ENCODE measurements at regions of chr9 and their contacts with region 1.

Region 1: DNA sequence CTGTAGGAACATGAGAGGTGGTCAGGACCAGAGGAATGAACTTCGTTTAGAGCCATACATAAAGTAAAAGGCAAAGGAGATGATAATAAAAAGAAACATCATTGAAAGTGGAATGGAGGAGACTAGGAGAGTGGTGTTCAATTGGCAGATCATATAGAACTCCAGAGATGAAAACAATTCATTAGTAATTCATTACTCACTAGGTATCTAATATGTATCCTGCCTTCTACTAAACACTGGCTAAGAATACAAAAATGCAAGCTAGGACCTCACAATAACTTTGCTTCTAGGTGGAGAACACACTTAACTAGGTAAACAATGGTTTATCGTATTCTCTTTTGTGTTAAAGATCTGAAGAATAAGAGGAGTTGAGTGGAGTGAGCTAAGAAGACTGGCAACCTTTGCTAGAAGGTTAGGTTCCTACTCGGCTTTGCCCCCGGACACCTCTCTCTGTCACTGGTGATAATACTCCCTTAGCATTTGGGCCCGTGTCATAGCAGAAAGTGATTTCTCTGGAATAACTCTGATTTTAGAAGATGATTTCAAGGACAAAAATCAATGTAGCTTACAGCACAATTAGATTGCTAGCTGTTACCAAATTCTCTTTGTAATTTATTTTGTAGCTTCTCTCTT is 88.6 kb upstream of the IFNE start:
- DNase-seq: no peak
- H3K4me3 ChIP-seq: no peak overlapping the region
- H3K27ac ChIP-seq: peak overlapping the region; percentile 37
- H3K4me1 ChIP-seq: peaks cover 21% of the 10 kb centered on the region
- H3K27me3 ChIP-seq: no peaks in the 10 kb centered on the region
- CTCF ChIP-seq: no peak

Region 2: GRCh38 chr9:21317956-21318923 is 252.5 kb before region 1 on chr9:
- CTCF ChIA-PET with region 1: interaction called, 21 read pairs
- dilution Hi-C with region 1: no loop called
- in situ Hi-C with region 1: no loop called
- intact Hi-C with region 1: no loop called
- DNase-seq: peak; percentile 25
- H3K4me3 ChIP-seq: no peak overlapping the region
- H3K27ac ChIP-seq: no peak overlapping the region
- H3K4me1 ChIP-seq: peaks cover 10% of the 10 kb centered on the region
- H3K27me3 ChIP-seq: no peaks in the 10 kb centered on the region
- CTCF ChIP-seq: peak; percentile 69 to 76

Region 3: DNA sequence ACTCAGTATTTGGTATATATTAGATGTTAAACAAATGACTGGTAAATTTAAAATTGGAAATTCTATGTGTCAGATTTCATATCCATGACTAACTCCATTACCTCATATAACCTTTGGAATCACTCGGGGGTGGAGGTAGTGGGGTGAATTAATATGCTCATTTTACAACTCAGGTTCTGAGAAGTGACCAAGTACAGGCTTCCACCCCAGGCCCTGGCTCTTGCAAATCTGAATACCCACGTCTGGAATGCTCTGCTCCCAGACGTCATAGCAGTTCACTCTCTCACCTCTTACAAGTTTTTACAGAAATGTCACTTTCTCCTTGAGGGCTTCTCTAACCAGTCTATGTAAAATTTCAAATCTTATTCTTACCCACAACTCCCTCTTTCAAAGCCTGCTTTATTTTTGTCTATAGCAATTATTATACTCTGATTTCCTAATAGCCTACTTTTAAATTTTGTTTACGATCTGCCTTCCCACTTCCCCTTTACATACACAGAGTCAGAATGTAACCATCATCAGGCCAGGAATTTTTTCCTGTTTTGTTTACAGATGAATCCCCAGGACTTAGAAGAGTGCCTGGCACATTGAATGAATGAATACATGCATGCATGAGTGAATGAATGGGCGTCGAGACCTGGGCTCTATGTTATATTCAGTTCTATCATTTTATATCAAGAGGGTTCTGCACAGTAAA is 45.5 kb after region 1 on chr9:
- CTCF ChIA-PET with region 1: no interaction called
- dilution Hi-C with region 1: no loop called
- in situ Hi-C with region 1: no loop called
- intact Hi-C with region 1: no loop called
- DNase-seq: peak; percentile 94
- H3K4me3 ChIP-seq: no peak overlapping the region
- H3K27ac ChIP-seq: peak overlapping the region; percentile 71
- H3K4me1 ChIP-seq: peaks cover 37% of the 10 kb centered on the region
- H3K27me3 ChIP-seq: no peaks in the 10 kb centered on the region
- CTCF ChIP-seq: no peak